ENCODE measurements at regions of chr3 and their contacts with region 1.

Region 1: DNA sequence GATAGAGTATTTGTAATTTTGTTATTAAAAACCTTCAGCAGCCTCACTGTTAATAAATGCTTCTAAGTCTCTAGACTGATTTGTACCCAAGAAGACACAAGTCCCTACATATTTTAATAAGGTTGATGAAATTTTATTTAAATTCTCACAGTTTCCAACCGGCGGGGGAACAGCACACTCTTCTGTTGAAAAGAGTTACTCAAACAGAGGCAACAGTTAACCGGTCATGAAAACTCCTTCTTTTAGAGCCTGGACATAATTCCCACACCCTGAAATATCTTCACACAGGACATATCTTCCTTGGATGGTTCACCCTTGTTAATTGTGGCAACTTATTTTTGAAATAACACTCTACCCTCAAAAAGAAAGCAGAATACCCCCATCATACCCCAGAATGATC is 278.8 kb downstream of the FOXP1 start:
- DNase-seq: no peak
- ATAC-seq: no peak
- H3K4me3 ChIP-seq: no peak overlapping the region
- H3K27ac ChIP-seq: no peak overlapping the region
- H3K4me1 ChIP-seq: no peaks in the 10 kb centered on the region
- H3K27me3 ChIP-seq: no peaks in the 10 kb centered on the region
- CTCF ChIP-seq: no peak; the same call in 1 of the 2 replicates

Region 2: DNA sequence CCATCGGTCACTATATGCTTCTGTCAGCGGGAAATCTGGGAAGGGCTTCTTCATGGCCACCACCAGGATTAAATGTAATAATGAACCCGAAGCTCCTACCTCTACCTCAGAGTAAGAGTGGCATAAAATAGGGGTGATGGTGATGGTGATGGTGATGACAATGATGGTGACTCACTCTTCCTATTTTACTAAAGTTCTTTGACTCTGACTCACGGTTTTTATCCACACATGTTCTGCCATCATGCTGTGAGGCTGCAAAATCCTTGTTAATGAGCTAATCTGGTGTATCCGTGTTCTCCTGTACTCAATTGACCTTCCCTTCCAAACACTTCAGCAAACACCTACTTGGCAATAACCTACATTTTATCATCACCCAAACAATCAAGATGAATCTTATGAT is 297.1 kb after region 1 on chr3:
- CTCF ChIA-PET with region 1: no interaction called
- POLR2A ChIA-PET with region 1: interaction called, 11 read pairs
- in situ Hi-C with region 1: no loop called
- intact Hi-C with region 1: no loop called
- DNase-seq: no peak
- ATAC-seq: no peak
- H3K4me3 ChIP-seq: no peak overlapping the region
- H3K27ac ChIP-seq: no peak overlapping the region
- H3K4me1 ChIP-seq: no peaks in the 10 kb centered on the region
- H3K27me3 ChIP-seq: no peaks in the 10 kb centered on the region
- CTCF ChIP-seq: no peak

Measured in Panc1 (cell line).